GM23248 (cell line): ENCODE measurements at regions of chr3 and their contacts with region 1.

Region 1: GRCh38 chr3:186806089-186807055 is at the start of gene RFC4:
- DNase-seq: peak; percentile 83
- H3K4me3 ChIP-seq: peak within 1 kb of the TSS; percentile 96
- H3K27ac ChIP-seq: peak within 1 kb of the TSS; percentile 26
- H3K4me1 ChIP-seq: peaks cover 10% of the 10 kb centered on the region
- H3K27me3 ChIP-seq: no peaks in the 10 kb centered on the region
- total RNA-seq, gene RFC4: 12.0 and 16.2 TPM in 2 replicates

Region 2: GRCh38 chr3:185976977-185977678 is 829.2 kb before region 1 on chr3:
- in situ Hi-C with region 1: loop called (anchors 25 kb)
- DNase-seq: peak; percentile 76
- H3K4me3 ChIP-seq: no peak overlapping the region
- H3K27ac ChIP-seq: no peak overlapping the region
- H3K4me1 ChIP-seq: no peaks in the 10 kb centered on the region
- H3K27me3 ChIP-seq: no peaks in the 10 kb centered on the region